PC-9 (cell line): ENCODE measurements at regions of chr2 and their contacts with region 1.

Region 1: GRCh38 chr2:65056215-65057053 is at the start of gene CEP68:
- DNase-seq: peak; percentile 95 to 97
- H3K4me3 ChIP-seq: peak within 1 kb of the TSS; percentile 86
- H3K27ac ChIP-seq: no peak within 1 kb of the TSS
- H3K4me1 ChIP-seq: peaks cover 14% of the 10 kb centered on the region
- H3K27me3 ChIP-seq: no peaks in the 10 kb centered on the region
- CTCF ChIP-seq: no peak
- total RNA-seq, gene CEP68: 10.8 and 11.5 TPM in 2 replicates

Region 2: DNA sequence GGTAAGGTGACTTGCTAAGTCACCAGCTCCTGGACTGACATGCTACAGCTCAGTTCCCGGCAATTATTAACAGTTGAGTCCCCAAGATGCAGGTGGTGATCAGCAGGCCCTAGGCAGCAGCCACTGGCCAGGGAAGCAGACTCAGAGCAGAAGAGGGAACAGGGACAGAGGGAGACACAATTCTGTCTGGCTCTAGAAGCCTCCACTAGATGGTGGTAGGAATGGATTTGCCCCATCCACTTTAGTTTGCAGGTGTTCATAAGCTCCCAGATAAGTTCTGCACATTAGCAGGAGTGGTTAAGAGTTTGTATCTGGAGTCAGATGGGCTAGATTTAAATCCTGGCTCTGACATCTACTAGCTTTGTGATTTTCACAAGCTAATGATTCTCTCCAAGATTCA is 92.7 kb before region 1 on chr2:
- CTCF ChIA-PET with region 1: no interaction called
- POLR2A ChIA-PET with region 1: interaction called, 17 read pairs
- intact Hi-C with region 1: no loop called
- DNase-seq: no peak
- H3K4me3 ChIP-seq: no peak overlapping the region
- H3K27ac ChIP-seq: no peak overlapping the region
- H3K4me1 ChIP-seq: no peaks in the 10 kb centered on the region
- H3K27me3 ChIP-seq: no peaks in the 10 kb centered on the region; the same call in 1 of the 2 replicates
- CTCF ChIP-seq: no peak

Region 3: DNA sequence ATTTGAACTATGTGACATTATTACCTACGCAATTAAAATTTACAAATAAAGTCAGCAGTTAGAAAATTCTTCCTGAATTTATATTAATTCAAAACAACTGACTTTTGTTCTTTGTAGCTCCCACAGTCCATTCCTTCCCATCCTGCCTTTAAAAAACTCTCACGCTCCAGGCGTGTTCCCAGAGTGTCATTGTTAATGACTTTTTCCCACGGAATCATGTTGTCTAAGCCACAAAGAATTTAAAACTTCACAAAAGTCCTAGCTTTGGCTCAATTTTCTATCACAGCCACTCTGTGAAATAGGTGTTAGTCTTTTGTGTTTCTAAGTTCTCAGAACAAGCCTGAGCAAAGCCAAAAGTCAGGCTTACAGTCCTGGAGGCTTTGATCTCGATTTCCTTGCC is 40.7 kb before region 1 on chr2:
- CTCF ChIA-PET with region 1: no interaction called
- POLR2A ChIA-PET with region 1: no interaction called
- intact Hi-C with region 1: no loop called
- DNase-seq: no peak
- H3K4me3 ChIP-seq: no peak overlapping the region
- H3K27ac ChIP-seq: no peak overlapping the region
- H3K4me1 ChIP-seq: no peaks in the 10 kb centered on the region
- H3K27me3 ChIP-seq: no peaks in the 10 kb centered on the region
- CTCF ChIP-seq: no peak

Region 4: GRCh38 chr2:65070172-65070830 is 13.9 kb after region 1 on chr2:
- CTCF ChIA-PET with region 1: no interaction called
- POLR2A ChIA-PET with region 1: interaction called, 11 read pairs
- intact Hi-C with region 1: no loop called
- DNase-seq: no peak
- H3K4me3 ChIP-seq: no peak overlapping the region
- H3K27ac ChIP-seq: no peak overlapping the region
- H3K4me1 ChIP-seq: peaks cover 3% of the 10 kb centered on the region; the same call in 1 of the 2 replicates
- H3K27me3 ChIP-seq: no peaks in the 10 kb centered on the region
- CTCF ChIP-seq: no peak

Region 5: DNA sequence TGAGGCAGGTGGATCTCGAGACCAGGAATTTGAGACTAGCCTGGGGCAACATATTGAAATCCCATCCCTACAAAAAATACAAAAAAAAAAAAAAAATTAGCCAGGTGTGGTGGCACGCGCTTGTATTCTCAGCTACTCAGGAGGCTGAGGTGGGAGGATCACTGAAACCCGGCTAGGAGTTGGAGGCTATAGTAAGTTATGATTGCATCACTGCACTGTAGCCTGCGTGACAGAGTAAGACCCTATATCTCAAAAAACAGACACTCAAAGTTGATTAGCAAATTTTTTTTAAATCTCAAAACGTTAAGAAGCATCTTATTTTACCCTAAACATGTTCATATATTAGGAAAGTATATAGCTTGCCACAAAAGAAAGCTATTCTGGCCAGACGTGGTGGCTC is 65.9 kb after region 1 on chr2:
- CTCF ChIA-PET with region 1: interaction called, 12 read pairs
- POLR2A ChIA-PET with region 1: interaction called, 11 read pairs
- intact Hi-C with region 1: no loop called
- DNase-seq: no peak
- H3K4me3 ChIP-seq: no peak overlapping the region
- H3K27ac ChIP-seq: no peak overlapping the region
- H3K4me1 ChIP-seq: peaks cover 20% of the 10 kb centered on the region
- H3K27me3 ChIP-seq: no peaks in the 10 kb centered on the region
- CTCF ChIP-seq: no peak